Left ventricle myocardium inferior (tissue), 1 donor: ENCODE measurements at regions of chr7 and their contacts with region 1.

Region 1: DNA sequence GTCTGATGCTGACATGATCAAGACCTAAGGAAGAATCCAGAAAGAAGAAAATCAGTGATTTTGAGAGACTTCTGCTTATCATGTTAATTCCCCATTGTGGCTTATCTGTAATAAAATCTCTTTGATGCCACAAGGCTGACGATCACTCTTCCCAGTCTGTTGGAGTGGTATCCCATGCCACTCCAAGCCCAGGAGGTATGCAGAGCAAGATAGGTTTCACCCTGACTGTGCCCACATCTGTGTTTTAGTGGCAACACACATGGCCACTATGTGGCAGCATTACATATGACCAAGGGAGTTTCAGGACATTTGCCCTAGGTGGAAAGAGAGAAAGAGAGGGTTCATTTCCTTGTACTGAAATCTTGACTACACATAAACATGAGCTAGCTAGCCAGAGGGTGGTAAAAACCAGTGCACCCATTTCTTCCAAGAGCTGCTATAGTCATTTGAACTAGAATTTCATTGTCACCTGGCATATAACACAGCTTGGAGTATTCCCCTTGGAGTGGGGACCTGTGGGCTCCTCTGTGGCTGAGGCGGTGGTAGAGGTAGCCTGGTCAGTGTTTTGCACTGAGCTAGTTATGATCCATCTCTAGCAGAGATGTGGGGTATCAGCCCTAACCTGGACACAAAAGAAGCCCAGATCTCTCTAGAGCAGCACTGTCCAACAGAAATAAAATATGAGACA is 20.8 kb downstream of the LAMB4 start:
- DNase-seq: no peak
- H3K4me3 ChIP-seq: no peak overlapping the region
- H3K27ac ChIP-seq: no peak overlapping the region
- H3K4me1 ChIP-seq: peaks cover 10% of the 10 kb centered on the region
- H3K27me3 ChIP-seq: no peaks in the 10 kb centered on the region
- CTCF ChIP-seq: peak; percentile 61

Region 2: GRCh38 chr7:108143658-108144420 is 34.5 kb after region 1 on chr7:
- intact Hi-C with region 1: loop called (anchors 5 kb)
- DNase-seq: no peak
- H3K4me3 ChIP-seq: no peak overlapping the region
- H3K27ac ChIP-seq: no peak overlapping the region
- H3K4me1 ChIP-seq: peaks cover 11% of the 10 kb centered on the region
- H3K27me3 ChIP-seq: no peaks in the 10 kb centered on the region
- CTCF ChIP-seq: no peak

Region 3: GRCh38 chr7:108167460-108167859 is 58.1 kb after region 1 on chr7:
- intact Hi-C with region 1: no loop called
- DNase-seq: no peak
- H3K4me3 ChIP-seq: peak overlapping the region; percentile 10
- H3K27ac ChIP-seq: no peak overlapping the region
- H3K4me1 ChIP-seq: peaks cover 7% of the 10 kb centered on the region
- H3K27me3 ChIP-seq: no peaks in the 10 kb centered on the region
- CTCF ChIP-seq: no peak

Region 4: GRCh38 chr7:108347616-108348015 is 238.3 kb after region 1 on chr7:
- intact Hi-C with region 1: no loop called
- DNase-seq: no peak
- H3K4me3 ChIP-seq: no peak overlapping the region
- H3K27ac ChIP-seq: no peak overlapping the region
- H3K4me1 ChIP-seq: no peaks in the 10 kb centered on the region
- H3K27me3 ChIP-seq: peaks cover 7% of the 10 kb centered on the region
- CTCF ChIP-seq: no peak